Activated B cell treated with CpG ODN at 0.5 μM for 24 hours (primary cell): ENCODE measurements at regions of chrX and their contacts with region 1.

Region 1: GRCh38 chrX:154980330-154981096 is 42.0 kb downstream of the F8 start:
- DNase-seq: peak; percentile 47
- ATAC-seq: peak; percentile 99
- H3K4me3 Mint-ChIP-seq: peak overlapping the region; percentile 73
- H3K27ac Mint-ChIP-seq: no peak overlapping the region
- H3K4me1 Mint-ChIP-seq: peaks cover 5% of the 10 kb centered on the region
- H3K27me3 Mint-ChIP-seq: no peaks in the 10 kb centered on the region
- CTCF ChIP-seq: no peak

Region 2: DNA sequence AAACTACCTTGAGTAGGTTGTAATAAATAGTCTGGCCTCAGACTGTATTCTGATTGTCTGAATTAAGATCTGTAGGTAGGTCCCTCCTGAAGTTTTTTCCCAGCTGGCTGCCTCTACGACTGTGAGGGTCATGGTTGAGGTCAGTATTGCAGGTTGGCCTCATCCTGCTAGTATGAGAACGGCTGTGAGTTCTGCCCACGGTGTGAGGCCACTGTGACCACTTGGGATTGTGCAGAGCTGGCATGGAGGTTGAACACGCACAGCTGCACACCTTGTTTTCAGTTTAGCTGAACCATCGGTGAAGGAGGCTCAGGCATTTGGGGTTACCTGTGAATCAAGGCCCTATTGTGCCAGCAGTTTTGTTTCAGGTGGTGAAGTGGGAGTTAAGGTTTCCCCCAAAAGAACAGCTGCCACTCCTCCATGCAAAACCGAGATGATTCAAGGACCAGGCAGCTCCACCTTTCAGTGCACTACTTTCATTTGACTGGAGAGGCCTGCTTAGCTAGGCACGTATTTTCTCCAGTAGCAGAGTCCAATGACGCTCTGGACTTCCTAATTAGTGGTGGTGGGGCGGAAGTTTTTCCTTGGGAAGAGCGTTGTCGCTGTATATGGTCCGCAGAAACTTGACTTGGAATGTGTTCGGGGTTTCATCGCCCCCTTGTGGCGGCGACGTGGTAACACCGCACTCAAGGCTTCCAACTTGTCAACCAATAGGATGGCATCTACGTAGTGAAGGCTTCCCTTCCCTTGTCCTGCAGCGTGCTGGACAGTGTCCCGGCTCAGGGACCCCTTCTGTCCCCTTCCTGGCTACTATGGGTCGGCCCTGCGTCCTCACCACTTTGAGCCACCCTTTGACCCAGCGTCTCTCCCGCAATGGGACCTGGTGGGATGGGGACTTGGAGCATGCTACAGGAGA is 76.6 kb after region 1 on chrX:
- CTCF ChIA-PET with region 1: interaction called, 21 read pairs
- POLR2A ChIA-PET with region 1: no interaction called
- intact Hi-C with region 1: loop called (anchors 1 kb)
- DNase-seq: peak; percentile 26
- ATAC-seq: peak; percentile 84
- H3K4me3 Mint-ChIP-seq: peak overlapping the region; percentile 48
- H3K27ac Mint-ChIP-seq: peak overlapping the region; percentile 35
- H3K4me1 Mint-ChIP-seq: peaks cover 13% of the 10 kb centered on the region
- H3K27me3 Mint-ChIP-seq: no peaks in the 10 kb centered on the region
- CTCF ChIP-seq: no peak

Region 3: DNA sequence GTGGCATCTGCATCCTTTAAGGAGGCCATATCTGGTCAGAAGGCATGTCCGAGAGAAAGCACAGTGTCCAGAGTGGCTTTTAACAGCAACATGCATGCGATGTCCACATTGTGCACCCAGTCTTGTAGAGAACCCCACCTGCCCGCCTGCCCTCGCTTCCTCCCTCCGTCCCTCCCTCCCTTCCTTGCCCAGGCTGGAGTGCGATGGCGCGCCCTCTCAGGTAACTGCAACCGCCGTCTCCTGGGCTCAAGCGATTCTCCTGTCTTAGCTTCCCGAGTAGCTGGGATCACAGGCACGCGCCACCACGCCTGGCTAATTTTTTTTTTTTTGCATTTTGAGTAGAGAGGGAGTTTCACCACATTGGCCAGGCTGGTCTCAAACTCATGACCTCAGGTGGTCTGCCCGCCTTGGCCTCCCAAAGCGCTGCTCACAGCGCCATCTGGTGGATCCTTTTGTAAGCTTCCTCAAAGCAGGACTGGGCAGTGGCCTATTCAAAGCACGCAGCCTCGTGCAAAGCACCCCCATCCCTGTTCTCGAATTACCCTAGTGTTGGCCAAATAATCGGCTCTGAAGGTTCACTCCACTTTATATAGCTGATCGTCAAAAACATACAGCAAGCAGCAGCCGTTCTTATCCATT is 105.8 kb after region 1 on chrX:
- CTCF ChIA-PET with region 1: no interaction called
- POLR2A ChIA-PET with region 1: no interaction called
- intact Hi-C with region 1: loop called (anchors 1 kb)
- DNase-seq: no peak
- ATAC-seq: peak; percentile 61
- H3K4me3 Mint-ChIP-seq: no peak overlapping the region
- H3K27ac Mint-ChIP-seq: no peak overlapping the region
- H3K4me1 Mint-ChIP-seq: no peaks in the 10 kb centered on the region
- H3K27me3 Mint-ChIP-seq: no peaks in the 10 kb centered on the region
- CTCF ChIP-seq: no peak

Region 4: GRCh38 chrX:155216179-155216939 is 235.8 kb after region 1 on chrX and contains the start of gene VBP1:
- CTCF ChIA-PET with region 1: no interaction called
- POLR2A ChIA-PET with region 1: no interaction called
- intact Hi-C with region 1: loop called (anchors 1 kb)
- DNase-seq: peak; percentile 66
- ATAC-seq: peak; percentile 98
- H3K4me3 Mint-ChIP-seq: peak within 1 kb of the TSS; percentile 90
- H3K27ac Mint-ChIP-seq: peak within 1 kb of the TSS; percentile 91
- H3K4me1 Mint-ChIP-seq: peaks cover 18% of the 10 kb centered on the region
- H3K27me3 Mint-ChIP-seq: no peaks in the 10 kb centered on the region
- CTCF ChIP-seq: no peak
- total RNA-seq, gene VBP1: 40.6 and 43.9 TPM in 2 replicates